ENCODE measurements at regions of chr4 and their contacts with region 1.

Region 1: DNA sequence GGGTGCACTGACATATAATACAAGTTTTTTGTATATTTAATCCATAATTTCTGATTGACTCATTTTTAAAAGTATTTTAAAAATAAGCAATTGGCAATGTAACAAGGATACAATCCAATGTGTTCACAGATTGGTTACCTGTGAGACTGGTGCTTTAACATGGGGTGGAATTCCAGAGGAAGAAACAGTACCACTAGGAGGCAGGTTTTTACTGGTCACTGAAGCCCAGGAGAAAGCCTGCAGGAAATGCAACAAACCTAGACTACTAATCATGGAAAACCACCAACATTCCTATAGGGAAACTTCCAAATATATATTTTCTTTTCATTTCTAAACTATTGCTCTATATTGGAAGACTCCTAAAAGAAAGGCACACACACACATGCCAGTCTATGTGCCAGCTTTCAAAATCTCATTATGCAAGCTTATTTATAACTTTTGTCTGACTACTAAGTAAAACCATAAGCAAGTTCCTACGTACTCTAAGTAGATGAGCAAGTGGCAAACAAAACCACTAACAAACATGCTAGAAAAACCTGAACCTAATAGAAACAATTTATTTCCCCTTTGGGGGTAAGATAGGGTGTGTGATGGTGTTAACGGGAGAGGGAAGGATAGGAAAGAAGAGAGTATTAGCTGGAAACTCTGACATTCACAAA is 19.2 kb downstream of the G3BP2 start:
- DNase-seq: peak; percentile 51
- ATAC-seq: peak; percentile 91
- H3K4me3 ChIP-seq: no peak overlapping the region
- H3K27ac ChIP-seq: no peak overlapping the region
- H3K4me1 ChIP-seq: no peaks in the 10 kb centered on the region
- H3K27me3 ChIP-seq: no peaks in the 10 kb centered on the region
- CTCF ChIP-seq: peak; percentile 69
- EP300 ChIP-seq: no peak
- POLR2A ChIP-seq: no peak
- RAD21 ChIP-seq: peak; percentile 57; the same call in 1 of the 2 replicates

Region 2: GRCh38 chr4:75623026-75623425 is 30.9 kb before region 1 on chr4:
- CTCF ChIA-PET with region 1: no interaction called
- POLR2A ChIA-PET with region 1: no interaction called
- in situ Hi-C with region 1: no loop called
- intact Hi-C with region 1: no loop called
- DNase-seq: no peak
- ATAC-seq: no peak
- H3K4me3 ChIP-seq: no peak overlapping the region
- H3K27ac ChIP-seq: no peak overlapping the region
- H3K4me1 ChIP-seq: no peaks in the 10 kb centered on the region
- H3K27me3 ChIP-seq: no peaks in the 10 kb centered on the region
- CTCF ChIP-seq: no peak
- EP300 ChIP-seq: no peak
- POLR2A ChIP-seq: no peak
- RAD21 ChIP-seq: no peak

Region 3: GRCh38 chr4:75708218-75708691 is 54.3 kb after region 1 on chr4:
- CTCF ChIA-PET with region 1: interaction called, 8 read pairs
- POLR2A ChIA-PET with region 1: no interaction called
- in situ Hi-C with region 1: loop called (anchors 10 kb)
- intact Hi-C with region 1: loop called (anchors 1 kb)
- DNase-seq: peak; percentile 43
- ATAC-seq: peak; percentile 86
- H3K4me3 ChIP-seq: no peak overlapping the region
- H3K27ac ChIP-seq: no peak overlapping the region
- H3K4me1 ChIP-seq: peaks cover 15% of the 10 kb centered on the region
- H3K27me3 ChIP-seq: no peaks in the 10 kb centered on the region
- CTCF ChIP-seq: peak; percentile 73
- EP300 ChIP-seq: no peak
- POLR2A ChIP-seq: no peak
- RAD21 ChIP-seq: peak; percentile 65

Region 4: GRCh38 chr4:75849461-75849860 is 195.5 kb after region 1 on chr4:
- CTCF ChIA-PET with region 1: no interaction called
- POLR2A ChIA-PET with region 1: no interaction called
- in situ Hi-C with region 1: no loop called
- intact Hi-C with region 1: loop called (anchors 1 kb)
- DNase-seq: no peak
- ATAC-seq: peak; percentile 79
- H3K4me3 ChIP-seq: peak overlapping the region in 1 of 3 experiments; percentile 25; a peak in 1 of 6 replicates
- H3K27ac ChIP-seq: no peak overlapping the region
- H3K4me1 ChIP-seq: peaks cover 33% of the 10 kb centered on the region
- H3K27me3 ChIP-seq: no peaks in the 10 kb centered on the region; a peak in 1 of 5 replicates
- CTCF ChIP-seq: 0 out of 2 replicates have a peak, but pooled peaks have one; percentile 22
- EP300 ChIP-seq: no peak
- POLR2A ChIP-seq: no peak
- RAD21 ChIP-seq: no peak

Measured in HepG2 (cell line).